Mucosa of descending colon (tissue), 3 donors: ENCODE measurements at regions of chr11 and their contacts with region 1.

Region 1: GRCh38 chr11:97140885-97141494 is 751.2 kb downstream of the JRKL start:
- DNase-seq: peak in 1 of 3 donors; percentile 21
- ATAC-seq: no peak
- H3K4me3 ChIP-seq: no peak overlapping the region
- H3K4me1 ChIP-seq: no peaks in the 10 kb centered on the region
- CTCF ChIP-seq: no peak

Region 2: DNA sequence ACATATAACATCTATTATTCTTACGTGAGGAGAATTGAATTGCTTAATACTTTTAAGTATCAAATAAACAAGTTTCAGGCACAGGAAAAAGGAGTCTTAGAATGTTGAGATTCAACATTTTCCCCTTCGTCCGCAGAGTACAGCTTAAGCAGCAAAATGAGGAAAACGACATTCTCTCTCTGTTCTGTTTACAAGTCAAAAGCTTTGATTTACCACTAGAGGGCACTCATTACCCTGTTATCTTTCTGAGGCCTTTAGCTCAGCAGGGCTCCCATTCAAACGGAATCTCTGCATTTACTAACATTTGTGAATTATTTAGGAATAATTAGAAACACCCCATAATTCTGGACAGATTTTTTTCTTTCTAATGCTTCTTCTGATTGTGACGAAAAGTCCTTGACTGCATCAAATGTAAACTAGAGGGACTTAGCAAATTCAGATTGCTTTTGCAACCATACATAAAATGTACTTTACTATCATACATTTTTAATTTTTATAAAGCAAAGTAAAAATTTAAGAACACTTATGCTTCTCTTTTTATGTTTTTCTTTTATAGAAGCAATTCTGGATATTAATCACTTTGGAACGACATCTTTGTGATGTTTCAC is 676.2 kb before region 1 on chr11:
- intact Hi-C with region 1: loop called in 1 of 2 experiments (anchors 5 kb)
- DNase-seq: peak in 1 of 3 donors; percentile 6
- ATAC-seq: peak; percentile 77
- H3K4me3 ChIP-seq: no peak overlapping the region
- H3K4me1 ChIP-seq: peaks cover 3% of the 10 kb centered on the region
- CTCF ChIP-seq: peak; percentile 49